ENCODE measurements at regions of chr3 and their contacts with region 1.

Region 1: DNA sequence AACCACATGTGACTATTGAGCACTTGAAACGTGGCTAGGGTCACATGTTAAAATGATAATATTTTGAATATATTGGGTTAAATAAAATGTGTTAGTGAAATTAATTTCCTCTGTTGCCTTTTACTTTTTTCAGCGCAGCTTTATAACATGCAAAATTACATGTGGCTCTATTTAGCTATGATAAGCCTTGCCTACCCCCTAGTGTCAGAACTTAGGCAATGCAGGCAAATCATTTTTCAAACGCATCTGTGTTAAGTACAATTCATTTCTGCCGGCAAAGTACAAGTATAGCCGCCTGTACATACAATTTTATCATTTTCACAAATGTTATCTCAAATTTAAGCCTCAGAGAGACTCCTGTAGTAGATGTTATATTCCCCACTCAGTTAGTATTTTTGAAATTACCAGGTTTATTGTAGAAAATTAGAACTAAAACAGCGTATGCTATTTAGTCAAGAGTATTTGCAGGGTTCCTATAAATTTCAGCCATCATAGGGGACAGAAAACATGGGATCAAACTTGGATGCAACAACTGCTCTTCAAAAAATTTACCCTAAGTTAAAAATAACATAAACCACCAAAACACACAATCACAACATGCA is 56.1 kb downstream of the TAFA4 start:
- DNase-seq: peak; percentile 45
- ATAC-seq: peak; percentile 72
- H3K4me3 ChIP-seq: no peak overlapping the region
- H3K27ac ChIP-seq: no peak overlapping the region
- H3K4me1 ChIP-seq: no peaks in the 10 kb centered on the region
- H3K27me3 ChIP-seq: peaks cover 21% of the 10 kb centered on the region
- CTCF ChIP-seq: peak; percentile 52 to 85 (median 78); a peak in 5 of 6 replicates
- POLR2A ChIP-seq: no peak
- RAD21 ChIP-seq: peak; percentile 78

Region 2: GRCh38 chr3:66938338-66938963 is 1937.8 kb before region 1 on chr3:
- CTCF ChIA-PET with region 1: interaction called, 8 read pairs
- POLR2A ChIA-PET with region 1: no interaction called
- RAD21 ChIA-PET with region 1: no interaction called
- intact Hi-C with region 1: loop called (anchors 5 kb)
- DNase-seq: peak; percentile 44
- ATAC-seq: peak; percentile 91
- H3K4me3 ChIP-seq: no peak overlapping the region
- H3K27ac ChIP-seq: no peak overlapping the region
- H3K4me1 ChIP-seq: no peaks in the 10 kb centered on the region
- H3K27me3 ChIP-seq: peaks cover 37% of the 10 kb centered on the region
- CTCF ChIP-seq: peak; percentile 44 to 76 (median 69); a peak in 5 of 6 replicates
- POLR2A ChIP-seq: no peak
- RAD21 ChIP-seq: peak; percentile 71

Region 3: DNA sequence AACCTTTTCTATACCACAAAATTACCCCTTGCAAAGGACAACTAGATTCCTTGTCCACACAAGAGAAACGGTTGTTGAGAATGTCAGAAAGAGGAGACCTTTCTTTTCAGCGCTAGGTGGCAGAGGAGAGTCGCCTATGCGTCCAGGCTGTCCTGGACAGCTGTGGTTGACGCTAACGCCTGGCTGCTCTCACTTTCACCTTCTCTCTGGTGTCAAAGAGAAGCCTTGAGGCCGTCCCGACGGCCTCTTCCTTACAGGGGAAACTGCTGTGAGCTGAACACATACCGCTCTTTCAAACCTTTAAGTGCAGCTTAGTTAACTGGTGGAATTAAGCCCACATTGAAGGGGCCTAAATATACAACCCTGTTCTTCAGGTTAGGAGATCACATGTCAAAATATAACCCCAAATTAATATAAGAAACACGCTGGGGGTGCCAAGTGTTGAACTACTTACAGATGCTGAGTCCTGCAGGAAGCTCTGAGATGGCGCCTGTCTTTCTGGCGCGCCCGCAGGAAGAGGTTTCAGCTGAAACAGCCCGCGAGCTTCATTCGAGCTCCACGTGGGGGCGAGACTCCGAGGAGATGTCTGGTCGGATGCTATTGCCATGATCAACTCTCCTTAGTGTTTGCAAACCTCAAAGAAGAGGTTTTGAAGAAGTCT is 1904.2 kb before region 1 on chr3:
- CTCF ChIA-PET with region 1: interaction called, 5 read pairs
- POLR2A ChIA-PET with region 1: no interaction called
- RAD21 ChIA-PET with region 1: no interaction called
- intact Hi-C with region 1: loop called (anchors 5 kb)
- DNase-seq: peak; percentile 51
- ATAC-seq: peak; percentile 98
- H3K4me3 ChIP-seq: peak overlapping the region; percentile 17 to 35; a peak in 3 of 4 replicates
- H3K27ac ChIP-seq: no peak overlapping the region
- H3K4me1 ChIP-seq: peaks cover 0 to 6% of the 10 kb centered on the region in 2 experiments; a peak in 1 of 4 replicates
- H3K27me3 ChIP-seq: peaks cover 30% of the 10 kb centered on the region
- CTCF ChIP-seq: peak; percentile 59 to 84 (median 83); a peak in 5 of 6 replicates
- POLR2A ChIP-seq: no peak
- RAD21 ChIP-seq: peak; percentile 71

Region 4: GRCh38 chr3:67384760-67385397 is 1491.3 kb before region 1 on chr3:
- CTCF ChIA-PET with region 1: interaction called, 3 read pairs
- POLR2A ChIA-PET with region 1: no interaction called
- RAD21 ChIA-PET with region 1: no interaction called
- intact Hi-C with region 1: loop called (anchors 2 kb)
- DNase-seq: peak; percentile 42
- ATAC-seq: peak; percentile 88
- H3K4me3 ChIP-seq: no peak overlapping the region
- H3K27ac ChIP-seq: no peak overlapping the region
- H3K4me1 ChIP-seq: no peaks in the 10 kb centered on the region
- H3K27me3 ChIP-seq: no peaks in the 10 kb centered on the region
- CTCF ChIP-seq: peak; percentile 33 to 81 (median 78); a peak in 5 of 6 replicates
- POLR2A ChIP-seq: no peak
- RAD21 ChIP-seq: peak; percentile 59

Region 5: GRCh38 chr3:67819447-67819846 is 1056.8 kb before region 1 on chr3:
- CTCF ChIA-PET with region 1: interaction called, 3 read pairs
- POLR2A ChIA-PET with region 1: no interaction called
- RAD21 ChIA-PET with region 1: no interaction called
- intact Hi-C with region 1: loop called (anchors 1 kb)
- DNase-seq: no peak
- ATAC-seq: peak; percentile 60
- H3K4me3 ChIP-seq: no peak overlapping the region
- H3K27ac ChIP-seq: no peak overlapping the region
- H3K4me1 ChIP-seq: no peaks in the 10 kb centered on the region
- H3K27me3 ChIP-seq: no peaks in the 10 kb centered on the region
- CTCF ChIP-seq: peak in 2 of 3 experiments; percentile 33 to 42; a peak in 3 of 6 replicates
- POLR2A ChIP-seq: no peak
- RAD21 ChIP-seq: peak; percentile 33

Region 6: DNA sequence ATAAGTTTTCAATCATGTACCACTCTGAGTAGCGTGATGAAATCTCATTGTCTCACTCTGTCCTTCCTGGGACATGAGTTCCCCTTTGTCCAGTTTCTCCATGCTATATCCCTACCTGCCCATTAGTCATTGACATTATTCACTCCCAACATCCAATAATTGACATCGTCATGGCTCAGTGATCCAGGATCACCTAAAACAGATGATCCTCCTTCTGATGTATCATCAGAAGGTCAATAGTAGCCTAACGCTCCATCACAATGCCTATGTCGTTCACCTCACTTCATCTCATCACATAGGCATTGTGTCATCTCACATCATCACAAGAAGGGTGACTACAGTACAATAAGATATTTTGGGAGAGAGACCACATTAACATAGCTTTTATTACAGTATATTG is 284.8 kb before region 1 on chr3:
- CTCF ChIA-PET with region 1: no interaction called
- POLR2A ChIA-PET with region 1: no interaction called
- RAD21 ChIA-PET with region 1: no interaction called
- intact Hi-C with region 1: no loop called
- DNase-seq: no peak
- ATAC-seq: no peak
- H3K4me3 ChIP-seq: no peak overlapping the region
- H3K27ac ChIP-seq: no peak overlapping the region
- H3K4me1 ChIP-seq: no peaks in the 10 kb centered on the region
- H3K27me3 ChIP-seq: no peaks in the 10 kb centered on the region
- CTCF ChIP-seq: no peak
- POLR2A ChIP-seq: no peak
- RAD21 ChIP-seq: no peak

Region 7: GRCh38 chr3:68802111-68802870 is 73.9 kb before region 1 on chr3:
- CTCF ChIA-PET with region 1: no interaction called
- POLR2A ChIA-PET with region 1: no interaction called
- RAD21 ChIA-PET with region 1: no interaction called
- intact Hi-C with region 1: no loop called
- DNase-seq: no peak
- ATAC-seq: no peak
- H3K4me3 ChIP-seq: no peak overlapping the region
- H3K27ac ChIP-seq: no peak overlapping the region
- H3K4me1 ChIP-seq: no peaks in the 10 kb centered on the region
- H3K27me3 ChIP-seq: no peaks in the 10 kb centered on the region
- CTCF ChIP-seq: no peak
- POLR2A ChIP-seq: no peak
- RAD21 ChIP-seq: no peak

Region 8: DNA sequence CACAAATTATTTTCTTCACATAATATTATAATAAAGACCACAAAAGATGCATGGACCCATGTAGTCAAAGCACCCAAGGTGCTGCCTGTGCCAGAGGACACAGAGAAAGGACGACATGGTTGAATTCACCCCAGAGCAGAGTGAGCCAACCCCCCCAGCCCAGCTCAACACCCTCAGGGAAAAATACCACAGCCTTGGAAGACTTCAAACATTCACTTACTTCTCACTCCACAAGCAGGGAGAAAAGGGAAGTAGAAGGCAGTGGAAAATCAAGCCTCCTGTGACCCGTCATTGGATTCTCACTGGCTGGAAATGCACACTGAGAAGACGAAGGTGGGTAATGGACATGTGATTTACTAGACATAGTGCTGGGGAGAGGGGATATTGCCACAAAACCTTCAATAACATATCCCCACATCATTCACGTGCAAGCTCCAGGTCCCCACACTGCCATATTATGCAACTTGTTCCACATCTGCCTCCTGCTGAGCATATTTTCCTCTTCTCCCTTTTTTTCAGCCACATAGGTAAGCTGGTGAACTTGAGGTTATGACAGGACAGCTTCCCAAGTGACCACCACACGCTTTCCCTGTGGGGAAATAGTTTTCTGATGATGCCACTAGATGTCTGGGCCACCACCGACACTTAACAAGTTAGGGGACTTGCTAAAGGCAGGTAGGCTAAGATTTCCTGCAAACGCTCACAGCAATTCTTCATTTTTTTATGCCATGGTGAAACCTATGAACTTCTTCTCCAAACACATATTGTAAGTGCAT is 14.5 kb before region 1 on chr3:
- CTCF ChIA-PET with region 1: no interaction called
- POLR2A ChIA-PET with region 1: no interaction called
- RAD21 ChIA-PET with region 1: no interaction called
- intact Hi-C with region 1: no loop called
- DNase-seq: no peak
- ATAC-seq: no peak
- H3K4me3 ChIP-seq: no peak overlapping the region
- H3K27ac ChIP-seq: no peak overlapping the region
- H3K4me1 ChIP-seq: no peaks in the 10 kb centered on the region
- H3K27me3 ChIP-seq: no peaks in the 10 kb centered on the region
- CTCF ChIP-seq: no peak
- POLR2A ChIP-seq: no peak
- RAD21 ChIP-seq: no peak

Region 9: GRCh38 chr3:68972358-68972979 is 96.3 kb after region 1 on chr3:
- CTCF ChIA-PET with region 1: no interaction called
- POLR2A ChIA-PET with region 1: no interaction called
- RAD21 ChIA-PET with region 1: no interaction called
- intact Hi-C with region 1: loop called (anchors 5 kb)
- DNase-seq: peak; percentile 44
- ATAC-seq: peak; percentile 99
- H3K4me3 ChIP-seq: no peak overlapping the region
- H3K27ac ChIP-seq: no peak overlapping the region
- H3K4me1 ChIP-seq: no peaks in the 10 kb centered on the region
- H3K27me3 ChIP-seq: peaks cover 31% of the 10 kb centered on the region
- CTCF ChIP-seq: peak; percentile 29 to 94 (median 91); a peak in 5 of 6 replicates
- POLR2A ChIP-seq: no peak
- RAD21 ChIP-seq: peak; percentile 74

Region 10: GRCh38 chr3:69305011-69305410 is 428.8 kb after region 1 on chr3:
- CTCF ChIA-PET with region 1: no interaction called
- POLR2A ChIA-PET with region 1: no interaction called
- RAD21 ChIA-PET with region 1: no interaction called
- intact Hi-C with region 1: no loop called
- DNase-seq: no peak
- ATAC-seq: no peak
- H3K4me3 ChIP-seq: no peak overlapping the region
- H3K27ac ChIP-seq: no peak overlapping the region
- H3K4me1 ChIP-seq: 0 out of 4 replicates have a peak, but pooled peaks cover 0 to 3% of the 10 kb centered on the region in 2 experiments
- H3K27me3 ChIP-seq: no peaks in the 10 kb centered on the region
- CTCF ChIP-seq: no peak
- POLR2A ChIP-seq: no peak
- RAD21 ChIP-seq: no peak

Measured in HCT116 (cell line).